Common myeloid progenitor, CD34-positive (primary cell): ENCODE measurements at regions of chr2 and their contacts with region 1.

Region 1: GRCh38 chr2:172056293-172056692 is 29.0 kb upstream of the DLX1 start:
- DNase-seq: no peak
- H3K4me3 ChIP-seq: no peak overlapping the region
- H3K27ac ChIP-seq: no peak overlapping the region
- H3K4me1 ChIP-seq: peaks cover 0 to 11% (median 3%) of the 10 kb centered on the region in 4 experiments
- H3K27me3 ChIP-seq: no peaks in the 10 kb centered on the region

Region 2: DNA sequence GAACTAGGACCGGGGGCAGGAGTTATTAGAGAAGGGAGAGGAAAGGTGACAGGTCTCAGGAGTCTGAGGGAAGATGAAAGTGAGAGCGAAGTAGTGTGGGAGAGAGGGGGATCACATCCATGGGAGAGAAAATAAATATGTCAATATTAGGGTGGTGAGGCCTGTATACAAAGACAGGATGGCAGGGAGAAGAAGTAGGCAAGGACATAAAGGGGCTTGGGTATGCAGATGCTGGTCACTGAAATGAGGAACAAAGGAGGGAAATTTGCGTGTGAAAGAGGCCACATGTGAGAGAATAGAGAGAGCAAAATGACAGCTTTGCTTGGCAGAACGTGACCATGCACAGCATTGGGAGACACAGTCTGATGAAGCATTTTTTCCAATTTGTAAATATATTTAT is 42.9 kb before region 1 on chr2:
- CTCF ChIA-PET with region 1: no interaction called
- POLR2A ChIA-PET with region 1: no interaction called
- DNase-seq: peak; percentile 36 to 82 (median 80)
- H3K4me3 ChIP-seq: no peak overlapping the region
- H3K27ac ChIP-seq: no peak overlapping the region
- H3K4me1 ChIP-seq: peaks cover 3 to 30% (median 17%) of the 10 kb centered on the region in 4 experiments
- H3K27me3 ChIP-seq: no peaks in the 10 kb centered on the region

Region 3: DNA sequence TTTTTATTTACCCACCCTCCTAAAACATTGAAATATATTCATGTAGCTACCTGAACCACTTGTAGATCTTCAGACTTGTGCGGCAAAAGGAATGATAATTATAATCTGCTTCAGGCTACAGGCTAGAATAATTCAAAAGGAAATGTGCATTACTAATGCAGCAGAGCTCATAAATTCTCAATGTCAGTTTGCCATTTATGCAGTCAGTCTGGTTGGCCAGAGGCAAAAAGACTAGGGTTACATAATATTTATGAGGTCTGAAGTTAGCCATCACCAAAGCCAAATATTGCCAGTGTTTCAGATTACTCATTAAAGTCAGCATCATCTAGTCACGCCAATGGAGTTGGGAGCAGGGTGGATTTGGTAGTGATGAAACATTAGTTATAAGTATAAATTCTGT is 17.7 kb before region 1 on chr2:
- CTCF ChIA-PET with region 1: interaction called, 10 read pairs
- POLR2A ChIA-PET with region 1: no interaction called
- DNase-seq: no peak
- H3K4me3 ChIP-seq: no peak overlapping the region
- H3K27ac ChIP-seq: no peak overlapping the region
- H3K4me1 ChIP-seq: no peaks in the 10 kb centered on the region
- H3K27me3 ChIP-seq: no peaks in the 10 kb centered on the region

Region 4: GRCh38 chr2:172394002-172394401 is 337.7 kb after region 1 on chr2:
- CTCF ChIA-PET with region 1: no interaction called
- POLR2A ChIA-PET with region 1: no interaction called
- DNase-seq: peak in 1 of 3 donors; percentile 32
- H3K4me3 ChIP-seq: peak overlapping the region in 3 of 7 experiments; percentile 14 to 24 (median 19)
- H3K27ac ChIP-seq: no peak overlapping the region
- H3K4me1 ChIP-seq: peaks cover 16 to 62% (median 54%) of the 10 kb centered on the region in 4 experiments
- H3K27me3 ChIP-seq: no peaks in the 10 kb centered on the region